Vagina (tissue), 2 donors: ENCODE measurements at regions of chr7 and their contacts with region 1.

Region 1: GRCh38 chr7:151368136-151368571 is 26.5 kb downstream of the NUB1 start:
- DNase-seq: no peak
- H3K4me3 ChIP-seq: no peak overlapping the region
- H3K27ac ChIP-seq: peak overlapping the region; percentile 28
- H3K4me1 ChIP-seq: peaks cover 26% of the 10 kb centered on the region
- H3K27me3 ChIP-seq: no peaks in the 10 kb centered on the region
- CTCF ChIP-seq: peak; percentile 94 to 99 (median 96)
- POLR2A ChIP-seq: no peak

Region 2: GRCh38 chr7:151448261-151449252 is 80.4 kb after region 1 on chr7:
- intact Hi-C with region 1: loop called (anchors 2 kb)
- DNase-seq: no peak
- H3K4me3 ChIP-seq: peak overlapping the region; percentile 48 to 52
- H3K27ac ChIP-seq: peak overlapping the region; percentile 72
- H3K4me1 ChIP-seq: peaks cover 12% of the 10 kb centered on the region
- H3K27me3 ChIP-seq: no peaks in the 10 kb centered on the region
- CTCF ChIP-seq: peak; percentile 79 to 82 (median 79)
- POLR2A ChIP-seq: no peak